MCF 10A (cell line): ENCODE measurements at regions of chr2 and their contacts with region 1.

Region 1: DNA sequence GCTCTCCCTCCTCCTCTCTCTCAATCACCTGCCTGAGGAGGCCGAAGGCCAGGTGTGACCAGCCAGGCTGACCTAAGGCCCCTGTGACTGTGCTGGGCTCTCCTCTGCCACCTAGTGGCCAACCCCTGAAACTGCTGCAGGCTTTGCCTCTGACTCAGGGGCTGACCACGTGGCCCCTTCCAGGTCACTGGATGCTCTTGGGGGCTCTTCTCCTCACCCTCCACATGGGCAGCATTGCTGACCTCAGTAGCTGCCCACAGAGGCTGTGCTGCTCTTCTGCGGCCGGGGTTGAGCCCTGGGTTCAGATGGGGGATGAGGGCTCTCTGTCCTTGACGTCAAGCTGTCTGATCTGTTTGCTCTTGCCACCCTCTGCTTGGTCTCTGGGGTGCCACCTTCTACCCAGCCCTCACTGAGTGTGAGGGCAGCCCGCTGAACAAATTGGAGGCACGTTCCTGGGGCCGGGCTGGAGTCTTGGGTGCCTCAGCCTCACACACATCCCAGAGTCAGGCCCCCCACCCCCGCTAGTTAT is 122.7 kb downstream of the TWIST2 start:
- DNase-seq: peak; percentile 72
- H3K4me3 Mint-ChIP-seq: no peak overlapping the region
- H3K27ac Mint-ChIP-seq: no peak overlapping the region
- H3K4me1 Mint-ChIP-seq: peaks cover 29% of the 10 kb centered on the region
- H3K27me3 Mint-ChIP-seq: no peaks in the 10 kb centered on the region
- CTCF ChIP-seq: peak; percentile 98

Region 2: DNA sequence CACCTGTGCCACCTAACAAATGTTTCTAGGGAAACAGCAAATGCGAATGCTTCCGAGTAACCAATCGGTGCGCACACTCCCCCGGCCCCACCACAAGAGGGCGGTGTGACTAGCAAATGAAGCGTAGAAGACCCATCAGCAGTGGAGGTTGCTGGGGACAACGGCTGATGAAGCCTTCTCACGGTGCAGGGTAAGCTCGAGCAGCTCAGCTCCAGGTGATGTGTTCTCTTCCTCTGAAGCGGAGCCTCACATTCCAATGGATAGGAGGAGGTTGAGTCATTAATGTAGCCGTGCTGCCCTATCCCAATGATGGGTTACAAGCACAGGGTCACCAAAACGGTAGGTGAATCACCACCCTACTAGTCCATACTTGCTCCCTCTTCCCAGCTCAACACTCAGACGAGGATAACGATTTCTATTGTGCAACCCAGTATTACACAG is 250.4 kb before region 1 on chr2:
- CTCF ChIA-PET with region 1: interaction called, 3 read pairs
- POLR2A ChIA-PET with region 1: no interaction called
- intact Hi-C with region 1: loop called (anchors 1 kb)
- DNase-seq: peak; percentile 98
- H3K4me3 Mint-ChIP-seq: peak overlapping the region; percentile 11
- H3K27ac Mint-ChIP-seq: peak overlapping the region; percentile 40
- H3K4me1 Mint-ChIP-seq: peaks cover 13% of the 10 kb centered on the region
- H3K27me3 Mint-ChIP-seq: no peaks in the 10 kb centered on the region
- CTCF ChIP-seq: peak; percentile 83

Region 3: GRCh38 chr2:238847841-238848690 is 122.6 kb before region 1 on chr2 and contains the start of gene TWIST2:
- CTCF ChIA-PET with region 1: interaction called, 5 read pairs
- POLR2A ChIA-PET with region 1: interaction called, 13 read pairs
- intact Hi-C with region 1: loop called (anchors 1 kb)
- DNase-seq: peak; percentile 90
- H3K4me3 Mint-ChIP-seq: peak within 1 kb of the TSS; percentile 89
- H3K27ac Mint-ChIP-seq: peak within 1 kb of the TSS; percentile 49
- H3K4me1 Mint-ChIP-seq: peaks cover 13% of the 10 kb centered on the region
- H3K27me3 Mint-ChIP-seq: no peaks in the 10 kb centered on the region
- CTCF ChIP-seq: no peak
- total RNA-seq, gene TWIST2: 30.2 and 31.6 TPM in 2 replicates

Region 4: DNA sequence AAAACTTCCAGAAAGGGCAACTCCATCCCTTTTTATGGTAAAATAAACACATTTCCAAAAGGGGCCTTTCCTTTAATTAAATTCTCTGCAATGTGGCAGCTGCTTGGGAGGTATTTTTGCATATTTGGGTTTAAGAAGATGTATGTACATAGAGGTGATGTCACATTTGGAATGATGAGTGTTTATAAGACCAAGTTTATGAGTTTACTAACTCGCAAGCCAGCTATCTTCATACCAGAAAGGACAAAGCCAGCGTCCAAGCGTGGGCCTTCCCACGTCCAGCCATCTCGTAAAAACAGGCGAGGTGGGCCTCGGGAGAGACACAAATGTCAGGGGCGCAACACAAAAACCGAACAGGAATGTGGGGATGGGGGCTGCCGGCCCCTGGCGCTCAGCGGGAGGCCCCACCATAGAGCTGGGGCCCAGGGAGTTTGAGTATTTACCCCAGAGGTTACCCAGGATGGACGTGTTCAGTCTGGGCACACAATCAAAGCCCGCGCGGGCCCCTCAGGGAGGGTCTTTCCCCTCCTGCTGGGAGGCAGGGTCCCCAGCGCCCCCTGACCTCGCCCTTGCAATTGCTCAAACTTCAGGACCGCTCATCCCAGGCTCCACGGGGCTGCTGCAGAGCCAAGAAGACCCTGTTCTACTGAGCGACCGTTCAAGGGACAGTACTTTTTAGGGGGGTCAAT is 14.6 kb after region 1 on chr2:
- CTCF ChIA-PET with region 1: interaction called, 4 read pairs
- POLR2A ChIA-PET with region 1: interaction called, 13 read pairs
- intact Hi-C with region 1: no loop called
- DNase-seq: no peak
- H3K4me3 Mint-ChIP-seq: no peak overlapping the region
- H3K27ac Mint-ChIP-seq: no peak overlapping the region
- H3K4me1 Mint-ChIP-seq: no peaks in the 10 kb centered on the region
- H3K27me3 Mint-ChIP-seq: no peaks in the 10 kb centered on the region
- CTCF ChIP-seq: no peak